Activated CD8-positive, alpha-beta memory T cell treated with anti-CD3 and anti-CD28 coated beads, Interleukin-2, amount 10 ng/mL, durations not matched to agents 7 days and 5 days (primary cell): ENCODE measurements at regions of chr9 and their contacts with region 1.

Region 1: DNA sequence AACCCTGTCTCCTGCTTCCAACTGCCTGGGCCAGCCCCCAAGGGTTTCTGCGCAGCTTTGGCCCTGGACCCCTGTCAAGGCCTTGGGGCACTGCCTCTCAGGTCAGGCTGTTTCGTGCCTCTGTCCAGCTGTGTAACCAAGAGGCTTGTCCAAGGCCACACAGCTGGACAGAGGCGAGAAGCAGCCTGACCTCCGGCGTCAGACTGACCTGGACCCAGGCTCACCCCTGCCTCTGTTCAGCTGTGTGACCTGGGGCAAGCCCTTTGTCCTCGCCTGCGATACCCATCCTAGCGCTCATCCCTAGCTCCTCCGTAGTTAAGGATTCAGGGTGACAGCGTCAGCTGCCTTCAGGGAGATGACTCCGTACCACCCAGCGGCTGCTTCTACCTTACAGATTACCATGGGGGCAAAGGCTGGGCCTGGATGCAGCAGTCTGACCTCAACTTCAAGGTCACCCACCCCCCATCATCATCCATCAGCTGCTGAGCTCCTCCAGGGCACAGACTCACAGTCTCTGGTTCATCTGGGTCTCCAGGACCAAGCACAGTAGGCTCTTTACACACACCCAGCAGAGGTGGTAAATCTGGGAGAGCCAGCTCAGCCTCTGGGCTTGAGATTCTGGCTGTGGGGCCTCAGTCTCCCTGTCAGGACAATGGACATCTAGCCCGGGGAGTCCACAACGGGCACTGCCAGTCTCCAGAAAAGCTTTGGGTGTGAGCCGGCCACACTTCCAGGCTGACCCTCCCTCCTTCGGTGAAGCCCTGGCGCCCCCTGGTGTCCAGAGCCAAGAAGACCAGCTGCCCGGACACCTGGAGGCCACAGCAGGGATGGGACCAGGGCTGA is 7.9 kb downstream of the AK1 start:
- DNase-seq: peak; percentile 88
- ATAC-seq: peak; percentile 86
- H3K4me3 Mint-ChIP-seq: no peak overlapping the region
- H3K27ac Mint-ChIP-seq: no peak overlapping the region
- H3K4me1 Mint-ChIP-seq: peaks cover 15% of the 10 kb centered on the region
- H3K27me3 Mint-ChIP-seq: no peaks in the 10 kb centered on the region

Region 2: DNA sequence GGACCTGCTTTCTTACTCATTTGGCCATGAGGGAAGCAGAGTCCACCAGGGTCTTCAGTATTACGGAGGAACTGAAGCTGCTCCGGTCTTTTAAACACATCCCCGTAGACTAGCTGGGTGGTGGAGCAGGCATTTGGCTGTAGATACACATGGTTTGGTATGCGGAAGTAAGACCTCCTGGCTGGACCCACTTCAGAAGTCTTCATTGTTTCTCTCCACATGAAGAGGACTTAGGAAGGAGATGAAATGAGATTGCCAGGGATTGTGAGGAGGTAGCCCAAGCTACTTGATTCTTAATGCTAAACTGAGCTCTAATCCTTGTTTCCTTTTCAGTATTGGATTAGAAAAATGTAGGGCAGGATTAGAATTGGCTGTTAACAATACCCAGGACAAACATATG is 224.6 kb before region 1 on chr9:
- CTCF ChIA-PET with region 1: no interaction called
- DNase-seq: no peak
- ATAC-seq: no peak
- H3K4me3 Mint-ChIP-seq: no peak overlapping the region
- H3K27ac Mint-ChIP-seq: no peak overlapping the region
- H3K4me1 Mint-ChIP-seq: no peaks in the 10 kb centered on the region
- H3K27me3 Mint-ChIP-seq: peaks cover 6% of the 10 kb centered on the region

Region 3: DNA sequence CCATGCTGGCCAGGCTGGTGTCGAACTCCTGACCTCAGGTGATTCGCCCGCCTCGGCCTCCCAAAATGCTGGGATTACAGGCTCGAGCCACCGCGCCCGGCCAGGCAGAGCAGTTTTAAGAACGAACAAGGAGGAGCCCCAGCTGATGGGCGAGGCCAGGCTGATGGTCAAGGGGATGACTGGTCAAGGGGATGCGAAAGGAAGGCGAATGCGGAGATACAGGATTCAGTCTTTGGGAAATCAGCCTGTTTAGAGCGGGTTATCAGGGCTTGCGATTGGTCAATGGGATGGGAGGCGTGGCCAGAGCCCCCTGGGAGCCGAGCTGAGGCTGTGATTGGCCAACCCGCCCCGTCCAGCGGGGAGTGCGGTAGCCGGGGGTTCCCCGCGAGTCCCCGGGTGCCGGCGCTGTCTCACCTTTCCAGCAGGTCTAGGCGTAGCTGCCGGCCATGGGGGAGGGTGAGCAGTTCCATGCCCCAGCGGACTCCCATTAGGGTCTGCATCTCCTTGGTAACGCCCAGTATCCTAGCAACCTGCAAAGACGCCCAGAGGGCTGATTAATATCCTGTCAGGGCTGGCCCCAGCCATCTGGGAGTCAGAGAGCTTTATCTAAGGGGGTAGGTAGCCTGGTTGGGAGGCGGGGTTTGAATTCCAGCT is 127.0 kb before region 1 on chr9:
- CTCF ChIA-PET with region 1: interaction called, 13 read pairs
- DNase-seq: no peak
- ATAC-seq: no peak
- H3K4me3 Mint-ChIP-seq: no peak overlapping the region
- H3K27ac Mint-ChIP-seq: no peak overlapping the region
- H3K4me1 Mint-ChIP-seq: peaks cover 4% of the 10 kb centered on the region
- H3K27me3 Mint-ChIP-seq: no peaks in the 10 kb centered on the region

Region 4: DNA sequence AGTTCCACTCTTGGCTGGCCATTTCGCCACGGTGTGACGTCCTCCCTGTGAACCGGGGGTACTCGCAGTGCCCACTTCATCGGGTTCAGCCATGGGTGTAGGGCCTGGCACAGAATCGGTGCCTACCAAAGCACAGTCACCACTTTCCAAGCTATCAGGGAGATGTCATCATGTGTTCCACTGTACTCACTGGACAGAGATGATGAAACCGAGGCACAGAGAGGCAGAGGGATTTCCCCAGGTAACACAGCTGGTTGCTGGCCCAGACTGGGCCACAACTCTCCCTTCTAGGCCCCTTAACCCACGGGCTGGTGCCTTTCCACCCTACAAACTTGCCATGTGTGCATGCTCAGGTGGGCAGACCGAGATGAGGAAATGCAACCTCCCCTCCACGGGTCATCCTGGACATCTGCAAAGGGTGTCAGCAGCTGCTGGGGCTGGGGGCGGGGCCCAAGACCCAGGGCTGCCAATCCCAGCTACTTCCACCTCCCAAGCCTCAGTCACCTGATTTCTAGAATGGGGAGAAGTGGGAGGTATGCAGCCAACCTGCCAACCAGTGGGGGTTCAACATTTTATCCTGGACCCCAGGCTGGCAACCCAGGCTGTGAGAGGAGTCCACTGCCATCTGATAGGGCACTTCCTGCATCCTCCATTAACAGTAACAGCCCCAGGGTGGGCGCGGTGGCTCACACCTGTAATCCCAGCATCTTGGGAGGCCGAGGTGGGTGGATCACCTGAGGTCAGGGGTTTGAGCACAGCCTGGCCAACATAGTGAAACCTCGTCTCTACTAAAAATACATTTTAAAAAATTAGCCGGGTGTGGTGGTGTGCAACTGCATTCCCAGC is 90.2 kb before region 1 on chr9:
- CTCF ChIA-PET with region 1: interaction called, 64 read pairs
- DNase-seq: peak; percentile 81
- ATAC-seq: peak; percentile 45
- H3K4me3 Mint-ChIP-seq: peak overlapping the region; percentile 100
- H3K27ac Mint-ChIP-seq: peak overlapping the region; percentile 97
- H3K4me1 Mint-ChIP-seq: peaks cover 62% of the 10 kb centered on the region
- H3K27me3 Mint-ChIP-seq: no peaks in the 10 kb centered on the region

Region 5: DNA sequence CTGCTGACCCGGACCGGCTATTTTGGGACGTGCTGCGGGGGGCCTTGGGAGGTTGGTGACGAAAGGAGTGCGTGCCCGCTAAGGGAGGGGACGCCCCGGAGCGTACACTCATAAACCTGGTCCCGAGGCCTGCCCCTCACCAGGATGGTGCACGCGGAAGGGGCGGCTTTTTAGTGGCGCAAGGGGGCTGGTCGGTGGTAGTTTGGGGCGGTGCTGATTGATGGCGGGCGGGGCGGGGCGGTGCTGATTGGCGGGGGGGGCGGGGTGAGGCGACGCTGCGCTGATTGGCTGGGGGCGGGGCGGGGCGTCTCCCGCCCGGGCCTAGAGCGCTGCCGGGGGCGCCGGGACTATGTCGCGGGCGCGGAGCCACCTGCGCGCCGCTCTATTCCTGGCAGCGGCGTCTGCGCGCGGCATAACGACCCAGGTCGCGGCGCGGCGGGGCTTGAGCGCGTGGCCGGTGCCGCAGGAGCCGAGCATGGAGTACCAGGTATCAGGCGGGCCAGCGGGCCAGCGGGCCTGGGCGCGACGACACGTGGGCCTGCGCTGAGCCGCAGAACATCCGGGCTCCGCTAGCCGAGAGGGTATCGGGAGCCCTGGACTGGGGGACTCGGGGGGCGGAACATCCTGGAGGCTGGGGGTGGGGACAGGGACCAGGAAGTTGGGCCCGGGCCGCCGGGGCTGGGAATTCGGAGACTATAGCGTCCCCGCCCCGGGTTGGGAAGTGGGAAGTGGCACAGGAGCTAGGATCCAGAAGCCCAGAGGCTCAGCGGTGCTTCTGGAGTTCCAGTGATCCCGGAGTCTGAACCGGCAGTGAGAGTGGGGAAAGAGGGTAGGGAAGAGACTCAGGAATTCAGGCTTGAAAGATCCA is 66.7 kb before region 1 on chr9 and contains the start of gene FPGS:
- CTCF ChIA-PET with region 1: interaction called, 30 read pairs
- DNase-seq: peak; percentile 90
- ATAC-seq: peak; percentile 88
- H3K4me3 Mint-ChIP-seq: peak within 1 kb of the TSS; percentile 95
- H3K27ac Mint-ChIP-seq: peak within 1 kb of the TSS; percentile 94
- H3K4me1 Mint-ChIP-seq: peaks cover 24% of the 10 kb centered on the region
- H3K27me3 Mint-ChIP-seq: no peaks in the 10 kb centered on the region
- total RNA-seq, gene FPGS: 109 to 117 TPM

Region 6: GRCh38 chr9:127854184-127854806 is 15.2 kb before region 1 on chr9 and contains the start of gene ENG:
- CTCF ChIA-PET with region 1: interaction called, 42 read pairs
- DNase-seq: no peak
- ATAC-seq: peak; percentile 70
- H3K4me3 Mint-ChIP-seq: peak within 1 kb of the TSS; percentile 77
- H3K27ac Mint-ChIP-seq: peak within 1 kb of the TSS; percentile 82
- H3K4me1 Mint-ChIP-seq: peaks cover 27% of the 10 kb centered on the region
- H3K27me3 Mint-ChIP-seq: no peaks in the 10 kb centered on the region
- total RNA-seq, gene ENG: 18.4 to 21.3 TPM